ENCODE measurements at regions of chr14 and their contacts with region 1.

Region 1: GRCh38 chr14:34436118-34436880 is 25.7 kb downstream of the SPTSSA start:
- DNase-seq: no peak
- ATAC-seq: no peak; the same call in 1 of the 2 replicates
- H3K4me3 ChIP-seq: no peak overlapping the region
- H3K27ac ChIP-seq: no peak overlapping the region
- H3K4me1 ChIP-seq: peaks cover 12% of the 10 kb centered on the region
- H3K27me3 ChIP-seq: no peaks in the 10 kb centered on the region
- CTCF ChIP-seq: no peak

Region 2: DNA sequence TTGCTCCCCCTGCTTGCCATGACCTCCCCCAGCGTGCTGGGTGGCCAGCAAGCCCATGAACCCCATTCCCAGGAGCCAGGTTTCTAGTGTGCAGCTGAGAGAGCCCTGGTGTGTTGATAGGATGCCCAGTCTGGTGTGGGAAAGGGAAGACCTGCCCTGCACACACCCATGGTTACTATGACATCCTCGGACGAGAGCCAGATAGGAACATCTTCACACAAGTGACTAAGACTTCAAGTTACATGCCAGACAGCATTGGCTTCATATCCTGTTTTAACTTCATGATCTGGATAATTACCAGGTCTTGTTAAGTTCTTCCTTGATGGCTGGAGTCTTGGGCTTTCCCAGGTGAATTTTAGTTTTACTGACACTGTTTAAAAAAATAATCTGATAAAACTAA is 288.8 kb before region 1 on chr14:
- CTCF ChIA-PET with region 1: interaction called, 11 read pairs
- POLR2A ChIA-PET with region 1: no interaction called
- in situ Hi-C with region 1: no loop called
- intact Hi-C with region 1: no loop called
- DNase-seq: no peak
- ATAC-seq: no peak
- H3K4me3 ChIP-seq: no peak overlapping the region
- H3K27ac ChIP-seq: no peak overlapping the region
- H3K4me1 ChIP-seq: no peaks in the 10 kb centered on the region
- H3K27me3 ChIP-seq: no peaks in the 10 kb centered on the region
- CTCF ChIP-seq: no peak

Region 3: DNA sequence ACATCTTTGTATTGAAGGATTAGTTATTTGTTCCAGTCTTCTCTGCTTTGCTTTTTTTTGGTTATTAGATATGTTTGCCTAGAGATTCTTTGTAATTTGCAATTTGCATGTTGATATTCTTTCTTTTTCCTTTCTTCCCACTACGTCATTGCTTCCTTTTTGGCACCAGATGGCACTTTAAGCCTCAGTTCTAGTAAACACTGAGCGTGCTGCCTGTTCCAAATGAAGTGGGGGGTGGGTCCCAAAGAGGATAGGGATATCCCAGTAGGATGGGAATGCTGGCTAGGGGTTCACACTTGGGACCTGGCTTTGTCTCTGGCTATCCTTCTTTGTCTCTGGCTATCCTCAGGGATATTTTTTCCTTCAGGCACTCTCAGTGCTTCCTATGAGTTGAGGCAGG is 86.2 kb after region 1 on chr14:
- CTCF ChIA-PET with region 1: interaction called, 15 read pairs
- POLR2A ChIA-PET with region 1: no interaction called
- in situ Hi-C with region 1: no loop called
- intact Hi-C with region 1: no loop called
- DNase-seq: no peak
- ATAC-seq: no peak
- H3K4me3 ChIP-seq: no peak overlapping the region
- H3K27ac ChIP-seq: no peak overlapping the region
- H3K4me1 ChIP-seq: no peaks in the 10 kb centered on the region
- H3K27me3 ChIP-seq: no peaks in the 10 kb centered on the region
- CTCF ChIP-seq: no peak

Measured in Panc1 (cell line).